ENCODE measurements at regions of chr4 and their contacts with region 1.

Region 1: GRCh38 chr4:79042079-79042674 is 102.9 kb upstream of the PAQR3 start:
- DNase-seq: peak; percentile 2
- H3K4me3 ChIP-seq: no peak overlapping the region
- H3K27ac ChIP-seq: no peak overlapping the region
- H3K4me1 ChIP-seq: no peaks in the 10 kb centered on the region
- H3K27me3 ChIP-seq: no peaks in the 10 kb centered on the region
- CTCF ChIP-seq: peak; percentile 44 to 63

Region 2: GRCh38 chr4:78971326-78971725 is 70.9 kb before region 1 on chr4:
- CTCF ChIA-PET with region 1: no interaction called
- dilution Hi-C with region 1: no loop called
- in situ Hi-C with region 1: no loop called
- intact Hi-C with region 1: no loop called
- DNase-seq: no peak
- H3K4me3 ChIP-seq: no peak overlapping the region
- H3K27ac ChIP-seq: no peak overlapping the region
- H3K4me1 ChIP-seq: no peaks in the 10 kb centered on the region
- H3K27me3 ChIP-seq: no peaks in the 10 kb centered on the region
- CTCF ChIP-seq: no peak

Region 3: GRCh38 chr4:79134767-79135166 is 92.6 kb after region 1 on chr4:
- CTCF ChIA-PET with region 1: no interaction called
- dilution Hi-C with region 1: no loop called
- in situ Hi-C with region 1: no loop called
- intact Hi-C with region 1: no loop called
- DNase-seq: no peak
- H3K4me3 ChIP-seq: no peak overlapping the region
- H3K27ac ChIP-seq: no peak overlapping the region
- H3K4me1 ChIP-seq: no peaks in the 10 kb centered on the region
- H3K27me3 ChIP-seq: no peaks in the 10 kb centered on the region
- CTCF ChIP-seq: no peak

Region 4: DNA sequence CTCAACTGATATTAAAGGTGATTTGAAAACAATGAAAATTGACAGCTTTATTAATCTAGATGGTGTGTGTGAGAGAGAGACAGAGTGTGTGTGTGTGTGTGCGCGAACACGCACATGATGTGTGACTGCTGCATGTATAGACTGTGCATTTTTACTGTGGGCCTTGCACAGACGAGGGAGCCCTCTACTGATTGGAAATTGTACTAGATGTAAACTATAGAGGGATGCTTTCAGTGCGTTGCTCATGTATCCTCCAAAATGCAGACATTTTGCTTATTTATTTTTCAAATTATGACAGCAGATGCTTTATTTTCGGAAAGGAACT is 534.2 kb after region 1 on chr4:
- CTCF ChIA-PET with region 1: no interaction called
- dilution Hi-C with region 1: no loop called
- in situ Hi-C with region 1: no loop called
- intact Hi-C with region 1: loop called (anchors 1 kb)
- DNase-seq: peak; percentile 9
- H3K4me3 ChIP-seq: no peak overlapping the region
- H3K27ac ChIP-seq: no peak overlapping the region
- H3K4me1 ChIP-seq: no peaks in the 10 kb centered on the region
- H3K27me3 ChIP-seq: no peaks in the 10 kb centered on the region
- CTCF ChIP-seq: peak; percentile 20 to 52

Region 5: DNA sequence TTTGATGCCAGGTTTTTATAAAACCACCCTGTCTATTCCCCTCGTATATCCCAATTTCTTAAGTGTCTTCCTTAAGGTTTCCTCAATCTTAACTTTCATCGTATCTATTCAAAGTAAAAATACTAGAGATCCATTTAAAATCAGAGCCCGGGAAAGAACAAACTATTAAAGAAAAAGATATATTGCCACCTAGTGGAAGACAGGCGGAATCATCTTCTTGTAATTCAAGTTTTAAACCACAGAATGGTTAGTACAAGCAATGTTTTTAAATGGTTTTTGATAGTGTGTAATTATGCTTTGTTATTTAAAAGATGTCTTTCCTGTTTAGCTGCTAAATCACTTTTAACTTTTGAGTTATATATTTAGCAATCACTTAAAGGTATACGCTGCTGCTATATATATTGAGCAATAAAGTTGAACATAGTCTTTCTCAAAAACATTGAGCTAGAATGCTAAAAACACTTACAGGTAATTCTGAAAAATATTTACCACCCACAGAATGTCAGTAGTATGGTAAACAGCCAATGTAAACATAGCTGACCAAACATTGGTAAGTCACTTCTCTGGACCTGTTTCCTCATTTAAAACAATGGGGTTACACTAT is 1173.4 kb after region 1 on chr4:
- CTCF ChIA-PET with region 1: no interaction called
- dilution Hi-C with region 1: no loop called
- in situ Hi-C with region 1: no loop called
- intact Hi-C with region 1: loop called (anchors 2 kb)
- DNase-seq: no peak
- H3K4me3 ChIP-seq: no peak overlapping the region
- H3K27ac ChIP-seq: no peak overlapping the region
- H3K4me1 ChIP-seq: peaks cover 16% of the 10 kb centered on the region
- H3K27me3 ChIP-seq: no peaks in the 10 kb centered on the region
- CTCF ChIP-seq: peak; percentile 60 to 61